Right cardiac atrium (tissue), 5 donors: ENCODE measurements at regions of chr2 and their contacts with region 1.

Region 1: GRCh38 chr2:159736048-159736447 is 23.7 kb downstream of the MARCHF7 start:
- DNase-seq: no peak
- ATAC-seq: no peak
- H3K4me3 ChIP-seq: no peak overlapping the region
- H3K27ac ChIP-seq: no peak overlapping the region
- H3K4me1 ChIP-seq: peaks cover 2% of the 10 kb centered on the region
- H3K27me3 ChIP-seq: no peaks in the 10 kb centered on the region

Region 2: DNA sequence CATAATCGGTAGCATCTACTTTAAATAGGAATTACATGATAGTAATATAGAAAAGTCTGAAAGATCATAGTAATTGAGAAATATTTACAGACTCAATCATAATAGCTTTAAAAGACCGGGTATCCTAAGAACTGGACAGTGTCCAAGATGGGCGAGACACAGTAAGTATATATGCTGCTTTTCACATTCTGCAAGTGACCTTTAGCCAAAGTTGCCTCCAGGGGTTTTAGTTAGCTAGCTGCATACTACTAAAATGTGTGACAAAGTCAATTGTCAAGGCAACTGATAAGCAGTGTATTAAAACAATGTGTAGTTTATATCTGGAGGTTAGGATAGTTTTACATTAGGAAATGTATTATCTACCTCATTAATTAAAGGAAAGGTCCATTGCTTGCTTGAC is 37.4 kb after region 1 on chr2:
- intact Hi-C with region 1: loop called in 1 of 4 experiments (anchors 2 kb)
- DNase-seq: no peak
- ATAC-seq: no peak
- H3K4me3 ChIP-seq: no peak overlapping the region
- H3K27ac ChIP-seq: no peak overlapping the region
- H3K4me1 ChIP-seq: no peaks in the 10 kb centered on the region
- H3K27me3 ChIP-seq: no peaks in the 10 kb centered on the region